Right ventricle myocardium inferior (tissue), 1 donor: ENCODE measurements at regions of chr5 and their contacts with region 1.

Region 1: DNA sequence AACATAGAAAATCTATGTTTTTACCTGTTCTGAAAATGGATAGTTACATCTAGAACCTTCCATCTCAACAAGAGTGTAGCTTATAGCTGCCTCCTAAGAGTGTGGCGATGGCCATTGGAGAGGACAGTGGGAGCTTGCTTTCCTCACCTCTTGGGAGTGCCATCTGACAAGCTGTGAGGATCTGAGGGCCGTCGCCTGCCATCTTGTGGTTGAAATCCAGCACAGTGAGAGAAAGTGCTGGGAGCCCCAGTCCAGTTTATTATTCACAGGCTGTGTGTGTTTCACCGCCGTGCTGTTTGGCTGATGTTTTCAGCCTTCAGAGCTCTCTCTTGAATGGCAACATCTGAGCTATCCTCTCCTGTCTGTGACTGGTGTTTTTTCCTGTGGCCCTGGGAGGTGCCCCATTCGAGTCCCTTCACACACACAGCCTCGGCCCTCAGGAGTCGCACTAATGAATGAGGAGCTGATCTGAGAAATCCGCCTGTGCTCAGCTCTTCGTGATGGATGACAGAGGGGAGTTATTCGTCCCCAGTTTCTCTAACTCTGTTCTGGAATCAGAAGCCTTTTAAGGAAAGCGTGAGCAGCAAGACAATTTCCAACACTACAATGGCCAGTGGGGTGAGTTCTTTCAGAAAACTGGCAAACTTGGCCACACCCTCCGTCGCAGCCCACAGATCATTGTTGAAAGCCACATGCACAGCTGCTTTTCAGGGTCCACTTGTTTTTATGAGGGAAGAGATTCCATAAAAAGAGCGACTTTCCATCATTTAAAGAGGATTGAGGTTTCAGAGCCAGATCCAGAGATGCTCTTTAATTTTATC is 170.3 kb downstream of the PDZD2 start:
- DNase-seq: no peak
- ATAC-seq: peak; percentile 90

Region 2: GRCh38 chr5:31581498-31582099 is 227.7 kb before region 1 on chr5:
- intact Hi-C with region 1: loop called (anchors 1 kb)
- DNase-seq: no peak
- ATAC-seq: no peak

Region 3: GRCh38 chr5:31648326-31648725 is 160.9 kb before region 1 on chr5:
- intact Hi-C with region 1: loop called (anchors 2 kb)
- DNase-seq: no peak
- ATAC-seq: no peak